ENCODE measurements at regions of chrX and their contacts with region 1.

Region 1: DNA sequence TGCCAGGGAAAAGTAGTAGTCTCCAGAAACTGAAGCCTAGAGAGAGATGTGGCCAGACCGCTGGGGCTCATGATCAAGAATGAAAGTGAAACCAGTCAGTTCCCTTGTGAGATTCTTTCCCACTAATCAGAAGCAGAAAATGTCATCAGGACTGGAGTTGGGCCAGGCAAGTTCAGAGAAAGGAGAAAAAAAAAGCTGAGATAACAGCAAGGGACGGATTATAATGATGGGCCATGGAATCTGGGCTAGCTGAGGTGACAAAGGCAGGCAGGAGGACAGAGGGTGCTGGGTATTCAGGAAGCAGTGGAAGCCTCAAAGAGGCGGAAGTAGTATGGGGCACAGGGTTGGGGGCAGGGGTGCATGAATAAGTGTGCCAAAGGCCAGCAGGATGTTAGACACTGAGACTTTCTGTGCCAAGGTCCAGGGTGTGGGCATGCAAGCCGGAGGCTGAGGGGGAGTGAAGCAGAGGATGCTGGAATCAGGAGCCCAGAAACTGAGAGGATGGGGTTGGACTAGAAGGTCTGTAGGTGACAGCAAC is 2.5 kb downstream of the CXorf38 start:
- DNase-seq: peak; percentile 43 to 66 (median 52)
- H3K4me3 ChIP-seq: peak overlapping the region; percentile 29
- H3K27ac ChIP-seq: peak overlapping the region in 1 of 2 donors; percentile 27
- H3K4me1 ChIP-seq: peaks cover 6% of the 10 kb centered on the region
- H3K27me3 ChIP-seq: no peaks in the 10 kb centered on the region
- CTCF ChIP-seq: no peak
- EP300 ChIP-seq: no peak
- POLR2A ChIP-seq: no peak

Region 2: DNA sequence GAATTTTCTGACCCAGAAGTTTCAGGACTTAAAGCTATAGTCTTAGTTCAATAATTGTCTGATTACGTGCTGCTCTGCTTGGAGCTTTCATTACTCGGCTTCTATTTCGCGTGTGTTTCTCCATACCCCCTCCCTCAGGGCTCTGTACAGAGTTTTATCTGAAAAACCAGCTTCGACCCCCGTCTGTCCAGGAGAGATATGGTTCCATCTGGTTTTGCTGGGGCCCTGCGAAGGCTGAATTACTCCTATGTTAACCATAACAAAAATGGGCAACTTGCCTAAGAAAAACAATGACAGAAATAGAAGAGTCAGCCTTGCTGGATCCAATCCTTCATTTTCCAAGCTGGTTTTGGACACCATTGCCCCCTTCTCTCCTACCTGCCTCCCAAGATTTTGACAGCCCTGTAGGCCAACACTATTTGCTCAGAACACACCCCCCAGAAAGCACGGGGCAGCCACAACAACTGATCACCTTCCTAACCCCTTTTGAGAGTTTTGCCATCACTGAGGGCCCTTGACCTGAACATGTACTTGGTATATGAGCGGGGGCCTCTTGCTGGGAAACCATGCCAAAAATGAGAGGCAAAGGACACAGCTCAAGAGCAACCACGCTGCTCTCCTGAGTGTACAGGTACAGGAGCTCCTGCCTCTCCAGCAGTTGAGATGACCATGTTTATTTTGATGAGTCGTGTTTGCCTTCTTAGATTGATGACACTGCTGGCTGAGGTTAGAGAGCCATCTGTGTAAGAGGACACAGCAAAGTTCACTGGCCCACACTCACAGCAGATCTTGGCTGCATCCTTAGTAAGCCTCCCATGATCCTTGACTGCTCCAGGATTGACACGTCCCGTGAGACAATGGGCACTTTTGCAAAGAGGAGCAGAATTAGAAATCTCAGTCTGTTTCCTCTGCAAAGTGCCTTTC is 100.3 kb before region 1 on chrX:
- intact Hi-C with region 1: loop called in 1 of 4 experiments (anchors 5 kb)
- DNase-seq: no peak
- H3K4me3 ChIP-seq: no peak overlapping the region
- H3K27ac ChIP-seq: peak overlapping the region in 1 of 2 donors; percentile 34
- H3K4me1 ChIP-seq: no peaks in the 10 kb centered on the region
- H3K27me3 ChIP-seq: no peaks in the 10 kb centered on the region
- CTCF ChIP-seq: no peak
- EP300 ChIP-seq: no peak
- POLR2A ChIP-seq: no peak

Region 3: DNA sequence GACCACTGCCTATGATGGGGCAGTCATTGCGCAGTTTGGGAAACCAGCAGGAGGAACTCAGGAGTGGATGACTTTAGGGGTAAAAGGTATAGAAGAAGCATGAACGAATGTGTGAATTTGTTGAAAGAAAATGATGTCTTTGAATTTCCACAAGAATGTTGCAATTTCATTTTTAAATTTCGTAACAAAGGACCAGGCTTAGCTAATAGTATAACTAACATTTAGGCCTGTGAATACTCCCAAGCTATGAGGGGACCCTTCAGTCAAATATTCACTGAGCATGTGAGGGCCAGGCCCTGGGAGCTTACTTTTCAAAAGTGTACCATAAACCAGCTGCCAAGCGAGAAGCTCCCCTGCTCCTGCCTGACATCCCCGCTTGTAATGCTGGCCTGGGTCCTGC is 16.4 kb before region 1 on chrX:
- intact Hi-C with region 1: no loop called
- DNase-seq: no peak
- H3K4me3 ChIP-seq: no peak overlapping the region
- H3K27ac ChIP-seq: no peak overlapping the region
- H3K4me1 ChIP-seq: no peaks in the 10 kb centered on the region
- H3K27me3 ChIP-seq: no peaks in the 10 kb centered on the region
- CTCF ChIP-seq: no peak
- EP300 ChIP-seq: no peak
- POLR2A ChIP-seq: no peak